H1 (cell line): ENCODE measurements at regions of chr2 and their contacts with region 1.

Region 1: GRCh38 chr2:17538844-17539554 is 1.5 kb upstream of the VSNL1 start:
- DNase-seq: peak in 1 of 2 experiments; percentile 75
- H3K4me3 ChIP-seq: peak overlapping the region; percentile 74 to 97 (median 93)
- H3K27ac ChIP-seq: peak overlapping the region; percentile 4; the same call in 1 of the 2 replicates
- H3K4me1 ChIP-seq: peaks cover 6 to 15% (median 9%) of the 10 kb centered on the region in 4 experiments; a peak in 4 of 7 replicates
- H3K27me3 ChIP-seq: peaks cover 0 to 5% (median 0%) of the 10 kb centered on the region in 4 experiments; a peak in 1 of 7 replicates
- CTCF ChIP-seq: peak in 1 of 3 experiments; percentile 5; a peak in 1 of 4 replicates
- EP300 ChIP-seq: 0 out of 3 replicates have a peak, but pooled peaks of 1 of the 2 experiments have one; percentile 27
- POLR2A ChIP-seq: peak; percentile 38 to 59
- RAD21 ChIP-seq: peak; percentile 6 to 13; a peak in 1 of 4 replicates

Region 2: DNA sequence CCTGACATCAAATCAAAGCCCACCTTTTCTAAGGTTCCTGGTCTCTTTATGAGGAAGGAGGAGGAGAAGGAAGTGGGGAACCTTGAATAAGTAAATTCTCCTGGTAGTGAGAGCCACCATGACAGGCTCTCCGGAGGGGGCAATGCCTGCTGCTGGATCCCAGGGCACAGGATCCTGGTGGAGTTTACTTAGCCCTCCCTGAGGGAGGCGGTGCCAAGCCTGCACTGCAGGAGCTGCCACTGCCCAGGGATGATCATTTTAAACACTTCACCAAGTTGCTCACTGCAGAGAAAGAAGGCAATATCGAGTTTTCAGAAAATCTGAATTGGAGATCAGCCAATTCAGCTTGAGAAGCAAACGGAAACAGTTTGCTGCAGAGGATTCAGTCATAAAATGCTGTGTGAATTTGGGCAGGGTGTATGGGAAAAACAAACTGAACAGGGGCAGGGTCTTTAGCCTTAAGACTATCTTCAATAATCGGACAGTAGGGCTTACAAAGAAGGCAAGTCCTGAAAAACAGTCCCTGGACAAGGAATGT is 221.5 kb before region 1 on chr2:
- CTCF ChIA-PET with region 1: no interaction called
- POLR2A ChIA-PET with region 1: no interaction called
- DNase-seq: no peak
- H3K4me3 ChIP-seq: no peak overlapping the region
- H3K27ac ChIP-seq: no peak overlapping the region
- H3K4me1 ChIP-seq: no peaks in the 10 kb centered on the region
- H3K27me3 ChIP-seq: no peaks in the 10 kb centered on the region
- CTCF ChIP-seq: no peak
- EP300 ChIP-seq: no peak
- POLR2A ChIP-seq: no peak
- RAD21 ChIP-seq: no peak

Region 3: DNA sequence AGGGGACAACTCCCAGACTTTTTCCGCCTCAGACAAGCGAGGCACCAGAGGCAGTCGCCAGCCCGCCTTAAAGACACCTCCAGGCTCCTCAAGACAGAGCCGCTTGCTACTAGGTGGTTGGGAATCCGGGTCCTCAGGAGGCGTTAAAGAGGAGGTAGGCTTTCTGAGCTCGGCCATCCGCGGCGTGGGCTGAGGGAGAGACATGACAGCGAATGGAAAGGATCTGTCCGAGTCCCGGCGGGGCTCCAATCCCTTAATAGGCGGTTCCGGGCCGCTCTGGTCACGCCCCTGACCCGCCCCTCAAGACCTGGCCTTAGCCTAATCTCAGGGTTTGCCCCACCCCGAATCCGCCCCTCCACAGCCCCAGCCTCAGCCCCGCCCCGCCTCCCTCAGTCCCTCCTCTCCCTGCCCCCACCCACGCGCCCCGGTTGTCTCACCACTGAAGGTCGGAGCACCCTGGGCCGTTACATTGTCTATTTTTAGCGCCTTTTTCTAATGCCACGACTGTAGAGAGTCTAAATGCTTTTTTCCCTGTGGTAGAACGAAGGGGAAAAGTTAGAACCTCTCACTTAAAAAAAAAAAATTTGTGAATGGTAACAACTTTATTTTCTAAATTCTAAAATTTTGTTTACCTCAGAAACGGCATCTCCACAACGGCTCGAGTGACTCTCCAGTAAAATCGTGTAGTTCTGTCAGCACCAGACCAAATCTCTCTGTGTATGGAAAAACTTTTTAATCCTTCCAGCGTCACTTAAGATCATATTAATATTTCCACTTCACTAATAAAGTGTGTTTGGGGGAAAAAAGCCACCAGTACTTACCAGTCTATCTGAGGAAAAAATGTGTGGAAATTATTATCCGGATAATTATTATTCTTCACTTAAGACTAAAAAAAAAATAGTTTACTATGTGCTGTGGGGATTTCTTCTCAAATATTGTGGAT is 20.5 kb before region 1 on chr2 and contains the start of gene RAD51AP2:
- CTCF ChIA-PET with region 1: no interaction called
- POLR2A ChIA-PET with region 1: interaction called, 14 read pairs
- DNase-seq: peak in 1 of 2 experiments; percentile 96
- H3K4me3 ChIP-seq: peak within 1 kb of the TSS; percentile 39 to 75 (median 64)
- H3K27ac ChIP-seq: no peak within 1 kb of the TSS
- H3K4me1 ChIP-seq: peaks cover 0 to 4% (median 1%) of the 10 kb centered on the region in 4 experiments; a peak in 3 of 7 replicates
- H3K27me3 ChIP-seq: peaks cover 0 to 2% (median 0%) of the 10 kb centered on the region in 4 experiments; a peak in 1 of 7 replicates
- CTCF ChIP-seq: no peak
- EP300 ChIP-seq: no peak
- POLR2A ChIP-seq: no peak
- RAD21 ChIP-seq: no peak
- total RNA-seq, gene RAD51AP2: 0.08 and 0.20 TPM in 2 replicates

Region 4: DNA sequence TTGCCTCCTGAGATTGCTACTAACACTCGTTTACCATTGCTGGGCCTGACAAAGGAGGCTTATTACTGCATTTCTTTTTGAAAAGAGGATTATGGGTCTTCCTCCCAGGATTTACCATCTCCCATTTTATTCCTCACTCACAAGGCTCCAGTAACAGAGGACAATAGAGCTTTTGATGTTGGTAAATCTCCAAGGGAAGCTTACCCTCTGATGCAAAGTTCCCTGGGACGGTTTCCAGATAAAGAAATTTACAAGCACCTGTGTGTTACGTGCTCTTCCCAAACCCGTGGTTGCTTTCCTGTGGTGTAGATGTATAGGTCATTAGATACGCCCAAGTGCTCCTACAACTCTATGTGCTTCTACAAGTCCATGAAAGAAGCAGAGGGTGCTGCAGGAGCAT is 18.6 kb after region 1 on chr2:
- CTCF ChIA-PET with region 1: interaction called, 8 read pairs
- POLR2A ChIA-PET with region 1: interaction called, 22 read pairs
- DNase-seq: no peak
- H3K4me3 ChIP-seq: peak overlapping the region in 1 of 4 experiments; percentile 7; a peak in 1 of 8 replicates
- H3K27ac ChIP-seq: peak overlapping the region; percentile 20; the same call in 1 of the 2 replicates
- H3K4me1 ChIP-seq: peaks cover 4 to 17% (median 8%) of the 10 kb centered on the region in 4 experiments; a peak in 5 of 7 replicates
- H3K27me3 ChIP-seq: no peaks in the 10 kb centered on the region
- CTCF ChIP-seq: no peak
- EP300 ChIP-seq: no peak
- POLR2A ChIP-seq: no peak
- RAD21 ChIP-seq: no peak